Activated CD4-positive, alpha-beta memory T cell treated with anti-CD3 and anti-CD28 coated beads, Interleukin-2, amount 10 ng/mL, durations not matched to agents 7 days and 5 days (primary cell): ENCODE measurements at regions of chr6 and their contacts with region 1.

Region 1: GRCh38 chr6:37516076-37516919 is 16.6 kb upstream of the CCDC167 start:
- DNase-seq: peak; percentile 89
- H3K4me3 Mint-ChIP-seq: peak overlapping the region; percentile 78
- H3K27ac Mint-ChIP-seq: peak overlapping the region; percentile 99
- H3K4me1 Mint-ChIP-seq: peaks cover 69% of the 10 kb centered on the region
- H3K27me3 Mint-ChIP-seq: no peaks in the 10 kb centered on the region

Region 2: GRCh38 chr6:37489660-37490361 is 26.5 kb before region 1 on chr6:
- CTCF ChIA-PET with region 1: interaction called, 15 read pairs
- POLR2A ChIA-PET with region 1: interaction called, 29 read pairs
- DNase-seq: no peak
- H3K4me3 Mint-ChIP-seq: no peak overlapping the region
- H3K27ac Mint-ChIP-seq: peak overlapping the region; percentile 60
- H3K4me1 Mint-ChIP-seq: peaks cover 64% of the 10 kb centered on the region
- H3K27me3 Mint-ChIP-seq: no peaks in the 10 kb centered on the region

Region 3: DNA sequence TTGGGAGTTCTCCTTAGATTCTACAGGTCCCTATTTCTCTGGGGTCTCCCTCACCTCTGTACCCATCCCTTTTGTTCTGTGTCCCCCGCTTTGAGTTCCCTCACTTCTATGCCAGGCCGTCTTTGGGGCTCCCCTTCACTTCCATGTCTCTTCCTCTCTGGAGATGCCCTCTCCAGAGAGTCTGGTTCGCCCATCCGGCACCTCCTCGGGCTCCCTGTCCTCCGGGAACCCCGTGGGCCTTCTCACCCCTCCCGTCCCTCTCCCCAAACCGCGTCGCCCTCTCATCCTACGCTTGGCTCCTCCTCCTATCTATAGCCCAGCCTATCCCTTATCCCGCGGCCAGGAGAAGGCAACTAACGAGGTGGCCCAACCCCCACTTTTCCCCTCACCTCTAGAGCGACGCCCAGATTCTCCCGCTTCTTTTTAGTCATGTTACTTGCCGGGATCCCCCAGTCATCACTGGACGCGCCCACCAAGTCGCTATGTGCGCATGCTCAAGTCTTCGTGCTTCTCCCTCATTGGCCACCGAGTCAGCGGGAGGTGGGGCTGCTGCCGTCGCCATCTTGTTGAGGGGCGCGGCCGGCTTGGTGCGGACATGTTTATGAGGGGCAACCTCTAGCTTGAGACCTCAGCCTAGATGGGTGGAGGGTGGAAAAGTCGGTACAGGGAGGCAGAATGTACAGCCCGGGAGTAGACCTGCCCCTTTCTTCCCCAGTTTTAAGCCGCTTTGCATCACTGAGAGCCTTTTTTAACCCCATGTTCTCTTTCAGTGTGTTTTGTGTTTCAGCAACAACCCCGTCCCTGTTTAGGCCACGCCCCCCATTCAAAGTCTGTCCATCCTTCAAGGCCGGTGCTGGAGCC is 16.6 kb before region 1 on chr6 and contains the start of gene CCDC167:
- CTCF ChIA-PET with region 1: interaction called, 33 read pairs
- POLR2A ChIA-PET with region 1: interaction called, 225 read pairs
- DNase-seq: peak; percentile 97
- H3K4me3 Mint-ChIP-seq: peak within 1 kb of the TSS; percentile 96
- H3K27ac Mint-ChIP-seq: peak within 1 kb of the TSS; percentile 90
- H3K4me1 Mint-ChIP-seq: peaks cover 83% of the 10 kb centered on the region
- H3K27me3 Mint-ChIP-seq: no peaks in the 10 kb centered on the region
- total RNA-seq, gene CCDC167: 52.2 to 55.0 TPM

Region 4: GRCh38 chr6:37566111-37566949 is 50.0 kb after region 1 on chr6:
- CTCF ChIA-PET with region 1: interaction called, 10 read pairs
- POLR2A ChIA-PET with region 1: interaction called, 4 read pairs
- DNase-seq: peak; percentile 71
- H3K4me3 Mint-ChIP-seq: no peak overlapping the region
- H3K27ac Mint-ChIP-seq: no peak overlapping the region
- H3K4me1 Mint-ChIP-seq: peaks cover 5% of the 10 kb centered on the region
- H3K27me3 Mint-ChIP-seq: peaks cover 17% of the 10 kb centered on the region